ENCODE measurements at regions of chr6 and their contacts with region 1.

Region 1: DNA sequence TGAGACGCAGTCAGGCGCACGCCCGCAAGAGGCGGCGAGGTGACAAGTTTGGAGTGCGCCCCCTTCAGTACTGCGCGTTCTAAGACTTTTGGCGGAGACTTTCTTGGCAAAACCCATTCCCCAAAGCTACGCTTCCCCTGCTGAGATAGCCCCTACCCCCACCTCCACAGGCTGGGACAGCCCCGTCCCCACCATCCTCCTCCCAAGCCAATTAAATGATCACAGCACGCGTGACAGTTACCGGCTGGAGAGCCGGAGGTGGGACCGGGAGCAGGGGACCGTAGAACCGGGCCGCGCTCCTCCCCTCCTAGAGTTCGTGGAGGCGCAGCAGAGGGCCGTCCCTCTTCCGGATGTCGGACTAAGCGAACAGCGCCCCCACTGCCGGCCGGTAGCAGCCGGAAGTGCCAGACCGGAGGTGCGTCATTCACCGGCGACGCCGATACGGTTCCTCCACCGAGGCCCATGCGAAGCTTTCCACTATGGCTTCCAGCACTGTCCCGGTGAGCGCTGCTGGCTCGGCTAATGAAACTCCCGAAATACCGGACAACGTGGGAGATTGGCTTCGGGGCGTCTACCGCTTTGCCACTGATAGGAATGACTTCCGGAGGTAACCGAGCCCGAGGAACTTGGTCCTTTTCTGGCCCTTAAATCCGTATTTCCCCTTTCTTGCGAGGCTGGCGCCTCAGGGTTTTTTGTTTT is at the start of gene TOMM6:
- DNase-seq: peak; percentile 95
- H3K4me3 Mint-ChIP-seq: peak within 1 kb of the TSS; percentile 97
- H3K27ac Mint-ChIP-seq: peak within 1 kb of the TSS; percentile 93
- H3K4me1 Mint-ChIP-seq: peaks cover 17% of the 10 kb centered on the region
- H3K27me3 Mint-ChIP-seq: peaks cover 12% of the 10 kb centered on the region
- total RNA-seq, gene TOMM6: 334 and 338 TPM in 2 replicates

Region 2: DNA sequence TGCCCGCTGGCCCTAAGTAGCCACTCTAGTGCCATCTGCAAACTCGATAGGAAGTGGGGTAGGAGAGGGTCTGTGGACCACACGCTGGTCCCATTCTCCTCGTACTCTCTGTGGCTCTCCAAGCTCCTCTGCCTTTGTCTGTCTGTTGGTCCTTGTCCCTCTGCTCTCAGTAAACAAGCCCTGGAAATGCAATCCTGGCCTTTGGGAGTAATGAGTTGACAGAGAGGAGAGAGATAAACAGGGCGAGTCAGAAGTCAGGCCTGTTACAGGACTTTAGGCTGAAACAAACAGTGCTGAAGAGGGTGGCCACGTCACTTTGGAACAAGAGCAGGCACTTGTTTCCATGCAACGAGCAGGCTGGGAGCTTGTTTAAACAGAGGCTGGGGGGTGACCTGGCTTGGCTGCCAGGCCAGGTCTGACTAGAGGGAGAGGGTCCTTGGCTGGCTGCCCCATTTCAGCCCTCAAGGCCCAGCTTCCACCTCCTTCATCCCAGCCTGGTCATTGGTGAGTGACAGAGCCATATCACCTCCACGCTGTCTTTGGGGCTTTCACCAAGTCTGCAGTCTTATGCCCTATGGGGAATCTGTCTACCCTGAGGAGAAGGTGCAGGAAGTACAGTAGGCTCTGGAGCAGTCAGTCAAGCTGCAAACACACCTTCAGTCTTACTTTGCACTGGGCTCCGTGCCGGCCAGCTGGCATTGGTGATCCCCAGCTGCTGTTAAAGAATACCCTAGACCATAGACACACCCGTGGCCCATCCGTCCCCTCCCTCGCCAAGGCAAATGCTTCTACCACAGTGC is 218.6 kb before region 1 on chr6:
- intact Hi-C with region 1: no loop called
- DNase-seq: no peak
- H3K4me3 Mint-ChIP-seq: no peak overlapping the region
- H3K27ac Mint-ChIP-seq: no peak overlapping the region
- H3K4me1 Mint-ChIP-seq: peaks cover 9% of the 10 kb centered on the region
- H3K27me3 Mint-ChIP-seq: no peaks in the 10 kb centered on the region

Region 3: GRCh38 chr6:41683510-41684310 is 103.7 kb before region 1 on chr6:
- intact Hi-C with region 1: loop called (anchors 2 kb)
- DNase-seq: peak; percentile 71
- H3K4me3 Mint-ChIP-seq: peak overlapping the region; percentile 75
- H3K27ac Mint-ChIP-seq: peak overlapping the region; percentile 73
- H3K4me1 Mint-ChIP-seq: peaks cover 6% of the 10 kb centered on the region
- H3K27me3 Mint-ChIP-seq: no peaks in the 10 kb centered on the region

Region 4: DNA sequence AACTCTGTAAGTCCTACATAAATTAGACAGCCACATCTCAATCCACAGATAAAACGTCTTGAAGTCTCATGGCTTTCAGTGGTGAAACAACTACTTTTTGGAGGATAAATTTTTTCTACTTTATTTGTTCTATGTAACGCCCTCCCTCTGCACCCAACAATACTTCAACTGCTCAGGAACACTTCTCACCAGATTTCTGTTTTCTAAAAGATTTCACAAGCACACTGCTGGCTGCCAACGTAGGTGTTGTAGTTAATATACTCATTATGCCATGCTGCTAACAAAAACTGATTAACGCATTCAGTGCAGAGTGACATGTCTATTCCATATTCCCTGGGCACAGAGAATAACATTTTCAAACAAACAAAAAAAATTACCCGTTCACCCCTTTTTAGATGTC is 97.6 kb after region 1 on chr6:
- intact Hi-C with region 1: no loop called
- DNase-seq: no peak
- H3K4me3 Mint-ChIP-seq: no peak overlapping the region
- H3K27ac Mint-ChIP-seq: no peak overlapping the region
- H3K4me1 Mint-ChIP-seq: peaks cover 8% of the 10 kb centered on the region
- H3K27me3 Mint-ChIP-seq: no peaks in the 10 kb centered on the region

Region 5: GRCh38 chr6:41895300-41896233 is 108.2 kb after region 1 on chr6 and contains the start of gene USP49:
- intact Hi-C with region 1: loop called (anchors 1 kb)
- DNase-seq: peak; percentile 84
- H3K4me3 Mint-ChIP-seq: no peak within 1 kb of the TSS
- H3K27ac Mint-ChIP-seq: peak within 1 kb of the TSS; percentile 97
- H3K4me1 Mint-ChIP-seq: peaks cover 10% of the 10 kb centered on the region
- H3K27me3 Mint-ChIP-seq: no peaks in the 10 kb centered on the region
- total RNA-seq, gene USP49: 4.8 and 5.3 TPM in 2 replicates

Region 6: GRCh38 chr6:41941280-41942066 is 154.1 kb after region 1 on chr6 and contains the start of gene CCND3:
- intact Hi-C with region 1: loop called (anchors 1 kb)
- DNase-seq: peak; percentile 89
- H3K4me3 Mint-ChIP-seq: peak within 1 kb of the TSS; percentile 99
- H3K27ac Mint-ChIP-seq: peak within 1 kb of the TSS; percentile 94
- H3K4me1 Mint-ChIP-seq: peaks cover 43% of the 10 kb centered on the region
- H3K27me3 Mint-ChIP-seq: no peaks in the 10 kb centered on the region
- total RNA-seq, gene CCND3: 351 and 356 TPM in 2 replicates

Region 7: GRCh38 chr6:42217519-42218367 is 430.4 kb after region 1 on chr6 and contains the start of gene MRPS10:
- intact Hi-C with region 1: loop called (anchors 1 kb)
- DNase-seq: peak; percentile 89
- H3K4me3 Mint-ChIP-seq: peak within 1 kb of the TSS; percentile 96
- H3K27ac Mint-ChIP-seq: peak within 1 kb of the TSS; percentile 89
- H3K4me1 Mint-ChIP-seq: peaks cover 20% of the 10 kb centered on the region
- H3K27me3 Mint-ChIP-seq: no peaks in the 10 kb centered on the region
- total RNA-seq, gene MRPS10: 48.8 and 49.7 TPM in 2 replicates